Activated CD4-positive, alpha-beta memory T cell treated with anti-CD3 and anti-CD28 coated beads for 36 hours (primary cell): ENCODE measurements at regions of chr4 and their contacts with region 1.

Region 1: GRCh38 chr4:54233277-54233696 is 4.2 kb downstream of the PDGFRA start:
- DNase-seq: peak; percentile 85
- H3K4me3 Mint-ChIP-seq: peak overlapping the region; percentile 63
- H3K27ac Mint-ChIP-seq: no peak overlapping the region
- H3K4me1 Mint-ChIP-seq: peaks cover 24% of the 10 kb centered on the region
- H3K27me3 Mint-ChIP-seq: peaks cover 59% of the 10 kb centered on the region

Region 2: DNA sequence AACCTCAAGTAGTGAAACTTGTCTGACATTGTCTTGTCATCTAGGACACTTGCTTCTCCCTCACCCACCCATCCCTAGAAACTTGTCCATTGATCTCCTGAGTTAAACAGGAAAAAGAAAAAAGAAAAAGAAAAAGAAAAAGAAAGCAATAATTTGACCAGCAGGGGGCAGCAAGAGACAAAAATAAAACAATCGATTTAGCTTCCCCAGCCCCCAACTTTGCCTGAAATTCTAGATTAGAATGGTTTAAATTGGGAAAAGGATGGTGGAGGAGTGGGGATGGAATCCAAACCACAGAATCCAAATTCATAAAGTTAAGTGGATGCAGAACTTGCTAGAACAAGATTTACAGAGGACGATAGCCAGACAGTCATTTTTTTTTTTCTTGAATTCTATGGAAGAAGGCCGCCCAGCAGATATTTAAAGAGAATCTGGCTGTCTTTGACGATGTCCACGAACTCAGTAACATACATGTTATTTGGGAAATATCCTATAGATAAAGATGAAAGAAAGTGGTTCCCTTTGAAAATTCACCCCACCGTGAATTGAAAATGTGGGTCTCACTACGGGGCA is 1857.1 kb before region 1 on chr4:
- CTCF ChIA-PET with region 1: interaction called, 20 read pairs
- POLR2A ChIA-PET with region 1: interaction called, 3 read pairs
- intact Hi-C with region 1: loop called (anchors 5 kb)
- DNase-seq: no peak
- H3K4me3 Mint-ChIP-seq: no peak overlapping the region
- H3K27ac Mint-ChIP-seq: no peak overlapping the region
- H3K4me1 Mint-ChIP-seq: no peaks in the 10 kb centered on the region
- H3K27me3 Mint-ChIP-seq: peaks cover 6% of the 10 kb centered on the region

Region 3: DNA sequence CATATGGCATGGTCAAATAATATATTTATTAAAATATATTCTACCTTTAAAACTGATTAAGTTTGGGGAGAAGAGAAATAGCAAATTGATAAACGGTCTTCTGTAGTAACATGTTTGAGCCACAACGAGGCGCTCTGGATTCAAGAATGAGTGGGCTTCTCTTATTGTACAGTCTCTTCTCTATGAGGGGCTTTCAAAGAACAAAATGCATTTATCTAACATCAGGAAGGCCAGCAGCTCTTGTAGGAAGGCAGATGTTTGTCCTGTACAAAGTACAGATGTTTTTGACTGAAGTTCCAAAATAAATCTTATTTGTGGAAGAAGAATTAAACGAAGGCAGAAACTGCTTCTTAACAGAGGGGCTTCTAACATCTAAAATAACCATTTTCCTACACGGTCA is 1217.6 kb before region 1 on chr4:
- CTCF ChIA-PET with region 1: interaction called, 13 read pairs
- POLR2A ChIA-PET with region 1: no interaction called
- intact Hi-C with region 1: loop called (anchors 2 kb)
- DNase-seq: peak; percentile 21
- H3K4me3 Mint-ChIP-seq: no peak overlapping the region
- H3K27ac Mint-ChIP-seq: no peak overlapping the region
- H3K4me1 Mint-ChIP-seq: peaks cover 22% of the 10 kb centered on the region
- H3K27me3 Mint-ChIP-seq: no peaks in the 10 kb centered on the region

Region 4: DNA sequence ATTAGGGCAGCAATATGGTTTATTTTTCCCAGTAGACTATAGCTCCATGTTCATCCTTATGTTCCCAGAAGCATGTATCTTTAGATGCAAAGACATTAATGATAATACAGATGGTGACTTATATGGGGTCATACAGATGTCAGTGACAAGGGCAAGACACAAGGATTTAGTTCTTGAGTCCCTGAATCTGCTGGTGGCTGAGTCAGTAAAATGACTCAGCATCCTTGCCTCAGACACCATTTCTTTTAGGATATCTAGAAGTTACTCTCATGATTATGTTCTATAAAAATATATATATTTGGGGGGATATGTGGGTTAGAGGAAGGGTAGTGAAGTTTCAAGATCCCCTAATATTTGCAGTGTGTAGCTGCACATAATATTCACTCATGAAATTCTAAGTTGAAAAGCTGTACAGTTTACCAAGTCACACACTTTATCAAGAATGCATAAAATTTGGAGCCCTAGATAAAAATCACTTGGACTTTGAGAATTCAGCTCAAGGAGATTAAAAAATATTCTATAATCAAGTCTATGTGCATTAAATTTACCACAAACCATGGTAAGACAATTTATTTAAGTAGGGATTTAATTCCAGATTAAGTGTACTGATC is 743.9 kb before region 1 on chr4:
- CTCF ChIA-PET with region 1: interaction called, 13 read pairs
- POLR2A ChIA-PET with region 1: no interaction called
- intact Hi-C with region 1: no loop called
- DNase-seq: no peak
- H3K4me3 Mint-ChIP-seq: no peak overlapping the region
- H3K27ac Mint-ChIP-seq: no peak overlapping the region
- H3K4me1 Mint-ChIP-seq: no peaks in the 10 kb centered on the region
- H3K27me3 Mint-ChIP-seq: peaks cover 12% of the 10 kb centered on the region

Region 5: GRCh38 chr4:53920116-53920515 is 313.2 kb before region 1 on chr4:
- CTCF ChIA-PET with region 1: interaction called, 23 read pairs
- POLR2A ChIA-PET with region 1: no interaction called
- intact Hi-C with region 1: no loop called
- DNase-seq: peak; percentile 20
- H3K4me3 Mint-ChIP-seq: no peak overlapping the region
- H3K27ac Mint-ChIP-seq: no peak overlapping the region
- H3K4me1 Mint-ChIP-seq: peaks cover 7% of the 10 kb centered on the region
- H3K27me3 Mint-ChIP-seq: peaks cover 12% of the 10 kb centered on the region

Region 6: GRCh38 chr4:54099748-54100574 is 133.3 kb before region 1 on chr4 and contains the start of gene GSX2:
- CTCF ChIA-PET with region 1: interaction called, 18 read pairs
- POLR2A ChIA-PET with region 1: no interaction called
- intact Hi-C with region 1: loop called (anchors 2 kb)
- DNase-seq: peak; percentile 16
- H3K4me3 Mint-ChIP-seq: peak within 1 kb of the TSS; percentile 52
- H3K27ac Mint-ChIP-seq: no peak within 1 kb of the TSS
- H3K4me1 Mint-ChIP-seq: peaks cover 42% of the 10 kb centered on the region
- H3K27me3 Mint-ChIP-seq: peaks cover 83% of the 10 kb centered on the region
- total RNA-seq, gene GSX2: not detected